HCT116 (cell line): ENCODE measurements at regions of chr22 and their contacts with region 1.

Region 1: DNA sequence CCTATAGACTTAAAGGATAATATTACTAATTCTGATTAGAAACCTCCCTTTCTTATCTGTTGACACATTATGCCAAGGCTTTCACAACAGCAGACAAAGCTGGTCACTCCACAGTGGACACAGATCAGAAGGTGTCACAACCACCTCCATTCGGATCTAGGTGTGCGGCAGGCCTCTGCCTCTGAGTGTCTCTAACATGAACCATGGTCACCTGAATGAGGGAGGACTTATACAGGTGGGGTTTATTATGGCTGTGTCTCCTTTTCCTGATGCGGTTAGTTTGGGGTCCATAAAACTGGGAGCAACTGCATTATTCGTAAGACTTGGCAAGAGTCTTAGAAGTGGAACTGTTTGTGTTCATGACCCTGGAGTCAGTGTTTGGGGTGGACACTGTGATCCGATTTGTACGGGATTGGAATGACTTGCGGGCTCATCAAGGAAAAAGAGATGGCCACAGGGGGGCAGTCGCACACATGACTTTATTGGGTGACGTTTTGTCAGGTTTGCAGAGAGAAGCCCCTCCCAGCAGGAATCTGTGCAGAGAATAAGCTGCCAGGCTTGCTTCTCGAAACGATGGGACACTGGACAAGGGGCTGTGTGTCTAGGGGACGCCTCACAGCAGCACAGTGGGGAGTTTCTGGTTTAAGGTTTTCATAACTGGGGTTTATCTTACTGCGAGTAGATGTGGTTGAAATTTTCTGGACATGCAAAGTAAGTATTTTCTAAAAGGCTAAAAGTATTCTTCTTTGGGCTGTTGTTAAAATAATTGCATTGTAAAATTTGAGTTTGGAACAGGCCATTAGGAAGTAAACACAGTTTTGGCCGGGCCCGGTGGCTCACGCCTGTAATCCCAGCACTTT is 90.6 kb downstream of the GAB4 start:
- DNase-seq: peak; percentile 65
- ATAC-seq: peak; percentile 95
- H3K4me3 ChIP-seq: no peak overlapping the region
- H3K27ac ChIP-seq: no peak overlapping the region
- H3K4me1 ChIP-seq: peaks cover 4 to 6% of the 10 kb centered on the region in 2 experiments
- H3K27me3 ChIP-seq: peaks cover 9% of the 10 kb centered on the region; the same call in 1 of the 2 replicates
- CTCF ChIP-seq: peak; percentile 41 to 81 (median 79); a peak in 5 of 6 replicates
- POLR2A ChIP-seq: no peak
- RAD21 ChIP-seq: peak; percentile 51; the same call in 1 of the 2 replicates

Region 2: GRCh38 chr22:16804882-16805281 is 112.5 kb before region 1 on chr22:
- CTCF ChIA-PET with region 1: no interaction called
- POLR2A ChIA-PET with region 1: no interaction called
- RAD21 ChIA-PET with region 1: no interaction called
- intact Hi-C with region 1: no loop called
- DNase-seq: no peak
- ATAC-seq: no peak
- H3K4me3 ChIP-seq: no peak overlapping the region
- H3K27ac ChIP-seq: no peak overlapping the region
- H3K4me1 ChIP-seq: 0 out of 4 replicates have a peak, but pooled peaks cover 0 to 3% of the 10 kb centered on the region in 2 experiments
- H3K27me3 ChIP-seq: no peaks in the 10 kb centered on the region
- CTCF ChIP-seq: no peak
- POLR2A ChIP-seq: no peak
- RAD21 ChIP-seq: no peak

Region 3: DNA sequence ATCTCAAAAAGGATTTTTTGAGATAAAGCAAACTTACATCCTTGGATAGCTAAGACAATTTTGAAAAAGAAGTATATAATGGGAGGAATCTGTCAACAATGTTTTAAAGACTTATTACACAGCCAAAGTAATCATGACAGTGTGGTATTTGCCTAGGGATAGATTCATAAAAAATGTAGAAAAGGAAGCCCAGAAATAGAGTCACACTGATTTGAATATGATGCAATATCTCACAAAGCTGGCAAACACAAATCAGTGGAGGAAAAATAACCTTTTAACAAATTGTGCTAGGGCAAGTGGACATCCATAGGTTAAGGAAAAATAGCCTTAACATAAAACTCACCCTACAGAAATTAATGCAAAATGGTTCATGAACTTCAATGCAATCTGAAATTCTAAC is 98.1 kb before region 1 on chr22:
- CTCF ChIA-PET with region 1: no interaction called
- POLR2A ChIA-PET with region 1: no interaction called
- RAD21 ChIA-PET with region 1: no interaction called
- intact Hi-C with region 1: no loop called
- DNase-seq: no peak
- ATAC-seq: no peak
- H3K4me3 ChIP-seq: no peak overlapping the region
- H3K27ac ChIP-seq: no peak overlapping the region
- H3K4me1 ChIP-seq: no peaks in the 10 kb centered on the region
- H3K27me3 ChIP-seq: no peaks in the 10 kb centered on the region
- CTCF ChIP-seq: no peak
- POLR2A ChIP-seq: no peak
- RAD21 ChIP-seq: no peak

Region 4: GRCh38 chr22:16937811-16938210 is 20.4 kb after region 1 on chr22:
- CTCF ChIA-PET with region 1: no interaction called
- POLR2A ChIA-PET with region 1: no interaction called
- RAD21 ChIA-PET with region 1: no interaction called
- intact Hi-C with region 1: loop called (anchors 2 kb)
- DNase-seq: no peak
- ATAC-seq: no peak
- H3K4me3 ChIP-seq: no peak overlapping the region
- H3K27ac ChIP-seq: no peak overlapping the region
- H3K4me1 ChIP-seq: no peaks in the 10 kb centered on the region
- H3K27me3 ChIP-seq: peaks cover 22% of the 10 kb centered on the region
- CTCF ChIP-seq: no peak
- POLR2A ChIP-seq: no peak
- RAD21 ChIP-seq: no peak

Region 5: GRCh38 chr22:16970446-16970845 is 53.1 kb after region 1 on chr22:
- CTCF ChIA-PET with region 1: no interaction called
- POLR2A ChIA-PET with region 1: no interaction called
- RAD21 ChIA-PET with region 1: no interaction called
- intact Hi-C with region 1: loop called (anchors 5 kb)
- DNase-seq: no peak
- ATAC-seq: no peak
- H3K4me3 ChIP-seq: no peak overlapping the region
- H3K27ac ChIP-seq: no peak overlapping the region
- H3K4me1 ChIP-seq: peaks cover 0 to 6% of the 10 kb centered on the region in 2 experiments; a peak in 3 of 4 replicates
- H3K27me3 ChIP-seq: peaks cover 40% of the 10 kb centered on the region; the same call in 1 of the 2 replicates
- CTCF ChIP-seq: no peak
- POLR2A ChIP-seq: no peak
- RAD21 ChIP-seq: no peak